AG04450 (cell line): ENCODE measurements at regions of chr6 and their contacts with region 1.

Region 1: DNA sequence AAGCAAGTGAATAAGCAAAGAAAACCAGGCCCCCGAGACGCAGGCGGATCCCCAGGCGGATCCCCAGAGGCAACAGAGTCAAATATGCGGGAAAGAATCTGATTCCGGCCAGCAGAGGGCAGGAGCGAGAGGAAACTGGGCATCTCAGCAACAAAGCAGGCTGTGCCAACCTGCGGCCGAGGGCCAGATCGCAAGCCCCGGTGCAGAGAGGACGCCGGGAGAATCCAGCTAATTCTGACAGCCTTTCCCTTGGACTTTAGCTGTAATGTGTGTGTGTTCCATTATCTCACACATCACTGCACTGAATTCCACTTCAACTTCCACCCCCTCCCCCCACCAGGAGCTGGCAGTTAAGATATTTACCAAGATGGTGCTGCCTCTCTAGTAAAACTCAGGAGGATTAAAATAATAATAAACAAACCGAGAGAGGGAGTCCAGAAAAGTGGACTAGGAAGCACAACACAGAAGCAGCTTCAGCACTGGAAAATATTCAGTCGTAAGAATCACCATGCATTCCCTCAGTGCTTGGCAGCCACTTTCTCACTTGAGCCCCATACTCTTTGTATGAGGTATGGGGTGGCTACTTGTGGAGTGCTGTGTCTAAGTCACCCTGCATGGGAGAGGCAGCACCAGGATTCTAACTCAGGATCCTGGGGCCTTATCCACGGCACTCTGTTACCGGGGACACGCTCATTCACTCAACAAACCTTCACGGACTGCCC is 66.2 kb upstream of the SNX9 start:
- DNase-seq: peak; percentile 57
- H3K4me3 ChIP-seq: peak overlapping the region; percentile 18
- H3K27ac ChIP-seq: no peak overlapping the region
- H3K27me3 ChIP-seq: no peaks in the 10 kb centered on the region
- CTCF ChIP-seq: peak; percentile 85

Region 2: GRCh38 chr6:157715765-157716164 is 41.1 kb before region 1 on chr6:
- CTCF ChIA-PET with region 1: interaction called, 13 read pairs
- POLR2A ChIA-PET with region 1: interaction called, 4 read pairs
- DNase-seq: peak; percentile 84
- H3K4me3 ChIP-seq: no peak overlapping the region
- H3K27ac ChIP-seq: peak overlapping the region; percentile 75
- H3K27me3 ChIP-seq: peaks cover 6% of the 10 kb centered on the region
- CTCF ChIP-seq: no peak

Region 3: GRCh38 chr6:157789861-157790260 is 33.0 kb after region 1 on chr6:
- CTCF ChIA-PET with region 1: interaction called, 13 read pairs
- POLR2A ChIA-PET with region 1: no interaction called
- DNase-seq: no peak
- H3K4me3 ChIP-seq: no peak overlapping the region
- H3K27ac ChIP-seq: no peak overlapping the region
- H3K27me3 ChIP-seq: no peaks in the 10 kb centered on the region
- CTCF ChIP-seq: no peak

Region 4: GRCh38 chr6:157830354-157831017 is 73.6 kb after region 1 on chr6:
- CTCF ChIA-PET with region 1: interaction called, 10 read pairs
- POLR2A ChIA-PET with region 1: no interaction called
- DNase-seq: no peak
- H3K4me3 ChIP-seq: no peak overlapping the region
- H3K27ac ChIP-seq: no peak overlapping the region
- H3K27me3 ChIP-seq: no peaks in the 10 kb centered on the region
- CTCF ChIP-seq: no peak

Region 5: GRCh38 chr6:157873735-157874344 is 117.0 kb after region 1 on chr6:
- CTCF ChIA-PET with region 1: interaction called, 97 read pairs
- POLR2A ChIA-PET with region 1: interaction called, 3 read pairs
- DNase-seq: no peak
- H3K4me3 ChIP-seq: no peak overlapping the region
- H3K27ac ChIP-seq: no peak overlapping the region
- H3K27me3 ChIP-seq: no peaks in the 10 kb centered on the region
- CTCF ChIP-seq: peak; percentile 89

Region 6: GRCh38 chr6:158072083-158072721 is 315.3 kb after region 1 on chr6:
- CTCF ChIA-PET with region 1: interaction called, 27 read pairs
- POLR2A ChIA-PET with region 1: no interaction called
- DNase-seq: peak; percentile 58
- H3K4me3 ChIP-seq: no peak overlapping the region
- H3K27ac ChIP-seq: no peak overlapping the region
- H3K27me3 ChIP-seq: no peaks in the 10 kb centered on the region
- CTCF ChIP-seq: peak; percentile 86